Heart right ventricle (tissue), 16 donors: ENCODE measurements at regions of chr15 and their contacts with region 1.

Region 1: GRCh38 chr15:41507820-41508290 is 5.8 kb downstream of the LTK start:
- DNase-seq: peak in 1 of 2 donors; percentile 45
- ATAC-seq: peak in 6 of 8 donors; percentile 35 to 70 (median 42)
- H3K4me3 ChIP-seq: no peak overlapping the region
- H3K27ac ChIP-seq: no peak overlapping the region
- H3K4me1 ChIP-seq: peaks cover 8 to 22% (median 18%) of the 10 kb centered on the region in 9 donors
- H3K27me3 ChIP-seq: peaks cover 20 to 43% (median 39%) of the 10 kb centered on the region in 7 donors
- CTCF ChIP-seq: no peak

Region 2: DNA sequence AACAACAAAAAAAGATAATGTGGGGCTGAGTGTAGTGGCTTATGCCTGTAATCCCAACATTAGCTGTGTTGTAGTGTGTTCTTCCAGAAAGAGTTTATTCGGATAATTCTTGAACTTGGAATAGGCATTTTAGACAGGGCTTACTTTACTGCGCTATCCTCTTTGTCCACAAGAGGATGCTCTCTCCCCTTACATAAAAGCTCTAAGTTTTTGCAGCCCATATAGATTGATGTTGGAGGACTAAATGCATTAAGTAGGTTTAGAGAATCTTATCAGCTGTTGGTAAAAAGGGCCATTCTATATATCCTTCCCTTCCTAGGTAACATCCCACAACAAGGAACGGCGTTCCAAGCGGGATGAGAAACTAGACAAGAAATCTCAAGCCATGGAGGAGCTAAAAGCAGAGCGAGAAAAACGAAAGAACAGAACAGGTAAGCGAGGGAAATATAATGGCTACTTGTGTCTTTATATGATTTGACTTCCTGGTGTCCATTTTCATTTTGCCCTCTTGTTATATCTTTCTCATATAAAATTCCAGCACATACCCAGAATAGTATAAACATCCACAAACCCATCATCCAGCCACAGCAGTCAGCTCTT is 41.9 kb before region 1 on chr15:
- intact Hi-C with region 1: no loop called
- DNase-seq: no peak
- ATAC-seq: no peak
- H3K4me3 ChIP-seq: no peak overlapping the region
- H3K27ac ChIP-seq: no peak overlapping the region
- H3K4me1 ChIP-seq: no peaks in the 10 kb centered on the region
- H3K27me3 ChIP-seq: no peaks in the 10 kb centered on the region
- CTCF ChIP-seq: peak; percentile 34 to 87 (median 68)

Region 3: GRCh38 chr15:41575282-41575681 is 67.4 kb after region 1 on chr15:
- intact Hi-C with region 1: loop called in 1 of 10 experiments (anchors 2 kb)
- DNase-seq: no peak
- ATAC-seq: peak in 4 of 8 donors; percentile 16 to 57 (median 44)
- H3K4me3 ChIP-seq: no peak overlapping the region
- H3K27ac ChIP-seq: no peak overlapping the region
- H3K4me1 ChIP-seq: peaks cover 0 to 7% (median 0%) of the 10 kb centered on the region in 9 donors
- H3K27me3 ChIP-seq: no peaks in the 10 kb centered on the region
- CTCF ChIP-seq: no peak

Region 4: DNA sequence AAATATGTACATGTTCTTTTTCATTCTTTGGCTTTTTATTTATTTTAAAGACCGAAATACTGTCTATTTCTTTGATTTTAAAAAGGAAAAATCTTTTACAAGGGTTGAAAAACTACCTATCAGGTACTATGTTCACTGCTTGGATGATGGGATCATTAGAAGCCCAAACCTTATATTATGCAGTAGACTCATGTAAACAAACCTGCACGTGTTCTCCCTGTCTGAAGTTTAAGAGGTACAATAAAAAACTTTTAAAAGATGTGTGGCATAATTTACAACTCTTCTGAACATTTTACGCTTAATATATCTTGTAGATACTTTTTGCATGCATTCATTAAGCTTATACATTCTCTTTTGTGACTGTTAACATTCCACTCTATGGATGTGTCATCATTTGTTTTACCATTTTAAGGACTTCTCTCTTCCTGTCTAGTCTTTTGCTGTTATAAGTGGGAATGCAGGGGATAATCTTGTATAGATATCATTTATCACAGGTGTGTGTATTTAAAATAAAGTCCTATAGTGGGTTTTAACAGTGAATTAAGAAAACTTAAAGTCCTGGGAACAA is 158.6 kb after region 1 on chr15:
- intact Hi-C with region 1: no loop called
- DNase-seq: no peak
- ATAC-seq: no peak
- H3K4me3 ChIP-seq: no peak overlapping the region
- H3K27ac ChIP-seq: no peak overlapping the region
- H3K4me1 ChIP-seq: peaks cover 0 to 56% (median 26%) of the 10 kb centered on the region in 9 donors
- H3K27me3 ChIP-seq: no peaks in the 10 kb centered on the region
- CTCF ChIP-seq: no peak